ENCODE measurements at regions of chr6 and their contacts with region 1.

Region 1: GRCh38 chr6:132768051-132768517 is 10.4 kb upstream of the VNN2 start:
- DNase-seq: peak; percentile 55 to 72 (median 64)
- ATAC-seq: peak; percentile 92 to 99 (median 98)
- H3K4me3 ChIP-seq: peak overlapping the region; percentile 14 to 43 (median 29)
- H3K27ac ChIP-seq: no peak overlapping the region
- H3K4me1 ChIP-seq: peaks cover 0 to 11% (median 0%) of the 10 kb centered on the region in 4 donors
- H3K27me3 ChIP-seq: no peaks in the 10 kb centered on the region
- CTCF ChIP-seq: peak; percentile 78 to 96 (median 84)
- POLR2A ChIP-seq: no peak

Region 2: DNA sequence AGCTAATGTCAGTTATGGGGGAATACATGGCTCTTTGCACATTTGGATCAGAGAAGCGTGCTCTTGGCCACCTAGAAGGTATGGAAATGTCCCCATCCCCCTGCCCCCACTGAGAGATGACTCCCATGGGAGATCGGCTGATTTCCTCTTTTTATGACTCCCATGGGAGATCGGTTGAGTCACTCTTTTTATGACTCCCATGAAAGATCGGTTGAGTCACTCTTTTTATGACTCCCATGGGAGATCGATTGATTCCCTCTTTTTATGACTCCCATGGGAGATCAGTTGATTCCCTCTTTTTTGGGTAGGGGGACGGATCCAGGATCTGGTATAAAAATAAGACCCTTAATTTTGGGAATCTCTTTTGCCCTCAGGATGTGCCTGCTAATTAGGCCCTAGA is 240.3 kb before region 1 on chr6:
- intact Hi-C with region 1: loop called (anchors 10 kb)
- DNase-seq: no peak
- ATAC-seq: no peak
- H3K4me3 ChIP-seq: no peak overlapping the region
- H3K27ac ChIP-seq: no peak overlapping the region
- H3K4me1 ChIP-seq: no peaks in the 10 kb centered on the region
- H3K27me3 ChIP-seq: no peaks in the 10 kb centered on the region
- CTCF ChIP-seq: no peak
- POLR2A ChIP-seq: no peak

Region 3: GRCh38 chr6:132669690-132670291 is 98.3 kb before region 1 on chr6:
- intact Hi-C with region 1: loop called in 1 of 2 experiments (anchors 10 kb)
- DNase-seq: no peak
- ATAC-seq: peak; percentile 85 to 94 (median 88)
- H3K4me3 ChIP-seq: no peak overlapping the region
- H3K27ac ChIP-seq: peak overlapping the region in 1 of 3 donors; percentile 6
- H3K4me1 ChIP-seq: peaks cover 0 to 21% (median 7%) of the 10 kb centered on the region in 4 donors
- H3K27me3 ChIP-seq: no peaks in the 10 kb centered on the region
- CTCF ChIP-seq: peak; percentile 44 to 61 (median 54)
- POLR2A ChIP-seq: no peak

Region 4: DNA sequence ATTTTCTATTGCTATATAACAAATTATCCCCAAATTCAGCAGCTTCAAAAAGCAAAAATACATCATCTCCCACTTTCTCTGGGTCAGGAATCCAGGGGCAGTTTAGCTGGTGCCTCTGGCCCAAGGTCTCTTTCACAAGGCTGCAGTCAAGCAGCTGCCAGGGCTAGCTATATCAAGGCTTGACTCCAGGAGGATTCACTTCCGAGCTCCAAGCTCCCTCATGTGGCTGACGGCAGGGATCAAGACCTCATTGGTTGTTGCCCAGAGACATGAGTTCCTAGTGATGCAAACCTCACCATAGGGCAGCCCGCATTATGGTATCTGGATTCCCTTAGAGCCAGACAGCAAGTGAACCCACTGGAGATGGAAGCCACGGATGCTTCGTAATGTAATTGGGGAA is 52.9 kb before region 1 on chr6:
- intact Hi-C with region 1: no loop called
- DNase-seq: peak; percentile 71 to 86 (median 84)
- ATAC-seq: peak; percentile 57 to 85 (median 76)
- H3K4me3 ChIP-seq: no peak overlapping the region
- H3K27ac ChIP-seq: peak overlapping the region in 2 of 3 donors; percentile 88 to 95
- H3K4me1 ChIP-seq: peaks cover 0 to 48% (median 0%) of the 10 kb centered on the region in 4 donors
- H3K27me3 ChIP-seq: no peaks in the 10 kb centered on the region
- CTCF ChIP-seq: peak; percentile 36 to 64 (median 51)
- POLR2A ChIP-seq: no peak

Region 5: DNA sequence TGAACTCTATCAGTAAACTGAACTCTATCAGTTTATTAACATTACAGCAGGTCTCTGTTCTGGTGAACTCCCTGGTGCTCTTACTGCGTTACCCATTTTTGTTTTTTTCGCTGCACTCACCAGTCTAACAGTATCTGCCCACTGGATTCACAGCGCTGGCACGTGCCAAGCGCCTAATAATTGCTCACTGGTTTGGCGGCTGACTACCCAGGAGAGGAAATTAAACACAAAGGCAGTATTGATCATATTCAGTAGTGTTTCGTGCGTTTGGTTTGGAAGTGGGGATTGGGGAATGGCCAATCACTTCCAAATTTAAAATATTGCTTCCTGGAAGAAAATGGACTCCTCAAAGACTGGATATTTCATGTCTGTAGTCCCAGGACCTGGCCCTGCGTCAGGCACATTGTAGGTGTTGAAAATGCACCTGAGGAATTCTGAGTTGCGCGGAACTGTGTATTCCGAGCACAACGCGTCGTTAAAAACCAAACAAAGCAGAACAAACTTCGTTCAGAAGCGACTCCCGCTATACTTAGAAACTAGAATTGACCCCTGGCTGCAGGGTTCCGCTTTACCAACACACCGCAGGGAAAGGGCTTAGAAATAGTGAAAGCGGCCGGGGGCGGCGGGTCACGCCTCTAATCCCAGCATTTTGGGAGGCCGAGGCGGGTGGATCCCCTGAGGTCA is 45.2 kb after region 1 on chr6:
- intact Hi-C with region 1: no loop called
- DNase-seq: peak; percentile 40 to 67 (median 61)
- ATAC-seq: peak; percentile 33 to 60 (median 44)
- H3K4me3 ChIP-seq: peak overlapping the region; percentile 89 to 96 (median 94)
- H3K27ac ChIP-seq: peak overlapping the region; percentile 96 to 97 (median 96)
- H3K4me1 ChIP-seq: peaks cover 0 to 36% (median 2%) of the 10 kb centered on the region in 4 donors
- H3K27me3 ChIP-seq: no peaks in the 10 kb centered on the region
- CTCF ChIP-seq: no peak
- POLR2A ChIP-seq: peak; percentile 51

Measured in right lobe of liver (tissue), 6 donors.